SK-N-SH (cell line): ENCODE measurements at regions of chr2 and their contacts with region 1.

Region 1: GRCh38 chr2:26605195-26605998 is 35.8 kb downstream of the CIB4 start:
- DNase-seq: peak; percentile 78
- H3K4me3 ChIP-seq: no peak overlapping the region; a peak in 1 of 4 replicates
- H3K27ac ChIP-seq: no peak overlapping the region
- H3K4me1 ChIP-seq: no peaks in the 10 kb centered on the region; a peak in 1 of 4 replicates
- H3K27me3 ChIP-seq: peaks cover 21% of the 10 kb centered on the region
- CTCF ChIP-seq: peak; percentile 94
- EP300 ChIP-seq: no peak
- RAD21 ChIP-seq: peak; percentile 99

Region 2: DNA sequence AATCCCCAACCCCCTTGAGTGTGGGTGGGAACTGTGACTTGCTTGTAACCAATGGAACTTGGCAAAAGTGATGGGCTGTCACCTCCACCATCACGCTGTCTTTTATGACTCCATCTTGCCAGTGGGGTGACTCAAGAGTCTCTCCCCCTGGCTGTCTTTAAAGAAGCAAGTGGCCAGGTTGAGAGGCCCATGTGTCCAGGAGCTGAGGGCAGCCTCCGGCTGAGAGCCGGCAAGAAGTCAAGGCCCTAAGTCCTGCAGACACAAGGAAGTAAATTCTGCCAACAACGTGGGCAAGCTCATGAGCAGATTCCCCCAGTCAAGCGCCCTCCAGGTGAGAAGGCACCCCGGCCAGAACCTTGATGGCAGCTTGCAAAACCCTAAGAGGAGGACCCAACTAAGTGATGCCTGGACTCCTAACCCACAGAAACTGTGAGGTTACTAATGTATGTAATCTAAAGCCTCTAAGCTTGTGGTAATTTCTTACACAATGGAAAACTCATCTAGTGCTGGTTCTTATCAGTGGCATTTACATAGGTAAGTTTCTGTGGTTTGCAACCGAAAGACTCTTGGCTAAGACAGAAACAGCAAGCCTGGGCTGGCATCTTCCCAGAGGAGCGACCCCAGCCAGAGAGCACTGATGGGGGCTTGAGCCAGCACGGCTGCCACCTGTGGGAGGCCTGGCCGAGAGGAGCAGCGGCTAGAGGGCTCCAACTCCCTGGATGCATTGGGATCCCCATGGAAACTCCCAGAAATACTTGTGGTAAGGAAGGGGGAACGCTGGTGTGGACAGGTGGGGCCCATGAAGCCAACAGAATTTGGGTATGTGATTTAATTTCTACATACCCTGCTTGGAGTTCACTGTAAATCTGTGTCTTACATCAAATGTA is 13.5 kb before region 1 on chr2:
- CTCF ChIA-PET with region 1: interaction called, 150 read pairs
- POLR2A ChIA-PET with region 1: no interaction called
- DNase-seq: no peak
- H3K4me3 ChIP-seq: no peak overlapping the region
- H3K27ac ChIP-seq: no peak overlapping the region
- H3K4me1 ChIP-seq: peaks cover 0 to 10% of the 10 kb centered on the region in 2 experiments; a peak in 1 of 4 replicates
- H3K27me3 ChIP-seq: peaks cover 82% of the 10 kb centered on the region
- CTCF ChIP-seq: no peak
- EP300 ChIP-seq: no peak
- RAD21 ChIP-seq: no peak

Region 3: GRCh38 chr2:26640331-26640745 is 34.9 kb after region 1 on chr2:
- CTCF ChIA-PET with region 1: interaction called, 32 read pairs
- POLR2A ChIA-PET with region 1: no interaction called
- DNase-seq: peak; percentile 65
- H3K4me3 ChIP-seq: no peak overlapping the region
- H3K27ac ChIP-seq: no peak overlapping the region
- H3K4me1 ChIP-seq: peaks cover 0 to 10% of the 10 kb centered on the region in 2 experiments; a peak in 1 of 4 replicates
- H3K27me3 ChIP-seq: peaks cover 18% of the 10 kb centered on the region; the same call in 1 of the 2 replicates
- CTCF ChIP-seq: no peak
- EP300 ChIP-seq: no peak
- RAD21 ChIP-seq: no peak

Region 4: GRCh38 chr2:26685989-26686839 is 80.8 kb after region 1 on chr2:
- CTCF ChIA-PET with region 1: interaction called, 32 read pairs
- POLR2A ChIA-PET with region 1: no interaction called
- DNase-seq: no peak
- H3K4me3 ChIP-seq: no peak overlapping the region
- H3K27ac ChIP-seq: no peak overlapping the region
- H3K4me1 ChIP-seq: peaks cover 0 to 49% of the 10 kb centered on the region in 2 experiments; a peak in 2 of 4 replicates
- H3K27me3 ChIP-seq: peaks cover 60% of the 10 kb centered on the region
- CTCF ChIP-seq: no peak
- EP300 ChIP-seq: no peak
- RAD21 ChIP-seq: no peak

Region 5: GRCh38 chr2:26712486-26713465 is 107.4 kb after region 1 on chr2:
- CTCF ChIA-PET with region 1: interaction called, 70 read pairs
- POLR2A ChIA-PET with region 1: no interaction called
- DNase-seq: peak; percentile 81
- H3K4me3 ChIP-seq: no peak overlapping the region
- H3K27ac ChIP-seq: peak overlapping the region in 1 of 2 experiments; percentile 70; a peak in 2 of 4 replicates
- H3K4me1 ChIP-seq: peaks cover 0 to 58% of the 10 kb centered on the region in 2 experiments; a peak in 1 of 4 replicates
- H3K27me3 ChIP-seq: no peaks in the 10 kb centered on the region
- CTCF ChIP-seq: no peak
- EP300 ChIP-seq: no peak
- RAD21 ChIP-seq: no peak

Region 6: DNA sequence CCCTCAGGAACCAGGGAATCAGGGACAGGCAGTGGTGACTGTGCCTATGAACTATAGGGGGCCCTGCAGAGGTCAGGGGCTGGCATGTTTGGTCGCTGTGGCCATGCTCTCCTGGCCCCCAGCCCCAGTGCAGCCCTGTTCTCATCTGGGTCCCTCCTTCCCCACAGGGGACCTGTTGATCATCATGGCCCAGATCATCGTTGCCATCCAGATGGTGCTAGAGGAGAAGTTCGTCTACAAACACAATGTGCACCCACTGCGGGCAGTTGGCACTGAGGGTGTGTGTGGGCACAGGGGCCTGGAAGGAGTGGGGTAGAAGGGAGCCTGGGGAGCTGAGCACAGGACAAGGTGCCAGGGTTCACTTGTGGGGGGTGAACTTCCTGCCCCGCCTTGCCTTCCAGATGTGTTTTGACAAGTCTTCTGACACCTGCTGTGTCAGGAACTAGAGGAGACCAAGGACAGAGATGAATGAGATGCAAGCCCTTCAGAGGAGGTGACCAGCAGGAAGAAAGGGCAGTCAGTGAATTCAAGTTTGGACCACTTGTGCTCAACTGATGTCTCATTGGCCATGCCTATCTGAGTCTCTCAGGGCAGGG is 170.9 kb after region 1 on chr2:
- CTCF ChIA-PET with region 1: interaction called, 11 read pairs
- POLR2A ChIA-PET with region 1: no interaction called
- DNase-seq: no peak
- H3K4me3 ChIP-seq: no peak overlapping the region
- H3K27ac ChIP-seq: no peak overlapping the region
- H3K4me1 ChIP-seq: peaks cover 12 to 21% of the 10 kb centered on the region in 2 experiments; a peak in 2 of 4 replicates
- H3K27me3 ChIP-seq: no peaks in the 10 kb centered on the region
- CTCF ChIP-seq: no peak
- EP300 ChIP-seq: no peak
- RAD21 ChIP-seq: no peak